ENCODE measurements at regions of chr17 and their contacts with region 1.

Region 1: GRCh38 chr17:49899191-49899485 is 51.3 kb upstream of the TAC4 start:
- DNase-seq: no peak
- H3K4me3 ChIP-seq: no peak overlapping the region
- H3K27ac ChIP-seq: no peak overlapping the region
- H3K4me1 ChIP-seq: peaks cover 13% of the 10 kb centered on the region
- H3K27me3 ChIP-seq: peaks cover 4% of the 10 kb centered on the region
- CTCF ChIP-seq: peak in 1 of 2 donors; percentile 32

Region 2: GRCh38 chr17:49959183-49959935 is 60.2 kb after region 1 on chr17:
- CTCF ChIA-PET with region 1: no interaction called
- dilution Hi-C with region 1: loop called (anchors 5 kb)
- in situ Hi-C with region 1: no loop called
- intact Hi-C with region 1: no loop called
- DNase-seq: no peak
- H3K4me3 ChIP-seq: no peak overlapping the region
- H3K27ac ChIP-seq: no peak overlapping the region
- H3K4me1 ChIP-seq: peaks cover 6% of the 10 kb centered on the region
- H3K27me3 ChIP-seq: peaks cover 23% of the 10 kb centered on the region
- CTCF ChIP-seq: no peak

Measured in mammary epithelial cell (primary cell).